Activated naive CD4-positive, alpha-beta T cell treated with anti-CD3 and anti-CD28 coated beads, Interleukin-2, amount 10 ng/mL, durations not matched to agents 7 days and 5 days (primary cell): ENCODE measurements at regions of chr6 and their contacts with region 1.

Region 1: DNA sequence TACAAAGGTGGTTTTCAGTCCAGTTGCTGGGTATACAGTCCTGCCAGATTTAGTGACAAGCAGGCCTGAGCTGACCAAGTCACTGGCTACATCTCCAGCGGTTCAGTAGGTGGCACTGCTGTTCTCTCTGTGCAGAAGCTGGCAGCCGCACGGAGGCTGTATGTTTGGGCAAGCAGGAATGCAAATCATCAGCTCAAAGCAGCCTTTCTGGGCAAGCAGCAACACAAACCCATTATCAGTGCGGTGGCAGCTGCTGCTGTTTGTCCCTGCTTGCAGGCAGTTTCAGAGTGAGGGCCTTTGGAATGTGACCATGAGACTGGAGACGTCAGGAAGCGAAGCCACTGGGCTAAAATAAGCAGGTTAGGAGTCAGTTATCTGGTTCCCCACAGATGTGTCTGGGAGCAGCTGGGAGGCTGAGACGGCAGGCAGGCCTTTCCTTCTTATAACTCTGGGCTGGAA is 72.5 kb downstream of the TXLNB start:
- DNase-seq: peak; percentile 84
- H3K4me3 Mint-ChIP-seq: no peak overlapping the region
- H3K27ac Mint-ChIP-seq: peak overlapping the region; percentile 20
- H3K4me1 Mint-ChIP-seq: peaks cover 14% of the 10 kb centered on the region
- H3K27me3 Mint-ChIP-seq: no peaks in the 10 kb centered on the region

Region 2: DNA sequence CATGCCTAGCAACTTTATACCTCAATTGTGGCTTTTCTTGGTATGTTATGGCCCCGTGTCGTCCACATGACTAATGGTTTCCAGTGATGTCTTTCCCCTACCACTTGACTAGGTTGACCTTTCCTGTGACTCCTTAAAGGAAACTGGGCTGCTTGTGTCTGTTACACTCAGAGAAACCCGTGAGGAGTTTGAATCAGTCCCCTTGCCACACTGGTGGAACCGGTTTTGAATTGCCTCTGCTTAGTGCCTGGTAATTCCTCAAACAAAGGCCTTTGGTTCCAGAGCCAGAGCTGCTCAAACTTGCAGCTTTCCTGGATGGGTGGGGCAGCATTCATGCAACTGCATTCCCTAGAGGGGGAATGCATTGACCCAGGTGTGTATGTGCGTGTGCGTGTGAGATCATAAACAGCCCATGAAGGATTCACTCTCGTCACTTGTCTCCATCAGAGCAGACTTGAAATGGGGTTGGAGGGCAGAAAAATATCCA is 401.4 kb before region 1 on chr6:
- CTCF ChIA-PET with region 1: interaction called, 11 read pairs
- DNase-seq: no peak
- H3K4me3 Mint-ChIP-seq: no peak overlapping the region
- H3K27ac Mint-ChIP-seq: no peak overlapping the region
- H3K4me1 Mint-ChIP-seq: peaks cover 25% of the 10 kb centered on the region
- H3K27me3 Mint-ChIP-seq: no peaks in the 10 kb centered on the region

Region 3: GRCh38 chr6:139175389-139175788 is 43.9 kb before region 1 on chr6:
- CTCF ChIA-PET with region 1: interaction called, 11 read pairs
- DNase-seq: no peak
- H3K4me3 Mint-ChIP-seq: no peak overlapping the region
- H3K27ac Mint-ChIP-seq: peak overlapping the region; percentile 79
- H3K4me1 Mint-ChIP-seq: peaks cover 82% of the 10 kb centered on the region
- H3K27me3 Mint-ChIP-seq: no peaks in the 10 kb centered on the region

Region 4: DNA sequence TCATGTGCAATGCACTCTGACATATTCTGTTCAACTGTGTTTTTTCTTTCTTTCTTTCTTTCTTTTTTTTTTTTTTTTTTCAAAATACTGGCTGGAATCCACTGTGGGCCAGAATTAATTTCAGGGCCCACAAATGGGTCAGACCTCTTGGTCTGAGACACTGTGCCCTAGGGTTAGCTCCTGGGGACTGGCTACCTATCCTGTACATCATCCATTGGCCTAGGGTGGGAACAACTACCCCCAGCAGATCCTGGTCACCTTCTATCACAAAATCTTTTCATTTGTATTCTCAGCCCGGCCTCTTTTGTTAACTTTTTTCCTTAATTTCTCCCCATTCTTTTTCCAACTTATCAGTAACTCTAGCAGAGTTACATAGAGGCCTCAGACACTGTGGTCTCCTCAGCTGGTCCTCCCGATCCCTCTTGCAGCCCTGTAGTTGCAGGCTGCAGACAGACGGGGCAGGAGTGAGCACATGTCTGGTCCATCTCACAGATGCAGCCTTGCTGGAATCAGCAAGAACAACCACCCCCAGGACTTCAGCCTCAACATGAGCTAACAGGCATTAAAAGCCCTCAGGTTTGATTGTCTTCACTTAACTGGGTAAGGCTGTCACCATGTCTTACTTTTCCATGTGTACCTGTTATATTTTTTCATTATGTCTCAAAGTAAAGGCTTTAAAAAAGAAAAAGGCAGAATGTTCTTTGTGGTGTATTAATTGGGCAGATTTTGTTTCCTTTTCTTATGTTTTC is 31.2 kb after region 1 on chr6:
- CTCF ChIA-PET with region 1: interaction called, 11 read pairs
- DNase-seq: peak; percentile 72
- H3K4me3 Mint-ChIP-seq: peak overlapping the region; percentile 52
- H3K27ac Mint-ChIP-seq: peak overlapping the region; percentile 96
- H3K4me1 Mint-ChIP-seq: peaks cover 51% of the 10 kb centered on the region
- H3K27me3 Mint-ChIP-seq: no peaks in the 10 kb centered on the region

Region 5: DNA sequence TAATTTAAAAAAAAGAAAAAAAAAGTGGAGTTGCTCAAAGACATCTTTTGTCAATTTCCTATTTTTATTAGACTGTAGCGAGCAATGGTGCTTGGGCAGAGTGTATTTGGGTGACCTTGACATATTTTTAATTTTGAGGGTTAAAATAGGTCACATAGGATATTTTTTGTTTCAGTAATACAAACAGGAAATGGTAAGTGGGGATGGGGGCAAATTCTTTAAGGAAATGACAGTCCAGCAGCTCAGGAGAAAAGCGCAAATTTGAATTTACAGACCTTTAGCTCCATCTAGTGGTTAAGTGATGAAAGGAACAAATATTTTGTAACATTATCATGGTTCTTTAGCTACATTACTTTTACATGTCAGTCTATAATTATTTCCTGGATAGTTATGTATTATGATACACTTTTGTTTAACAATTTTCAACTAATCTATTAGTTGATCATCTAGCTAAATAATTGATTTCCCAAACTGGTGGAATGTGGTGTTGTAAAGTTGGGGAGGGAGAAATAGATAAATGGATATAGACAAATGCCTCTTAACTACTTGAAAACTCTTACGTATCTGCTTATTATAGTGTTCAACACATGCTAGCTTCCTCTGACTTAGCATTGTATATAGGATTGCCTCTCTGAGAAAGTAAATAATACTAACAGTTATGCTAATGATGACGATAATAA is 145.1 kb after region 1 on chr6:
- CTCF ChIA-PET with region 1: interaction called, 144 read pairs
- DNase-seq: no peak
- H3K4me3 Mint-ChIP-seq: no peak overlapping the region
- H3K27ac Mint-ChIP-seq: peak overlapping the region; percentile 10
- H3K4me1 Mint-ChIP-seq: peaks cover 34% of the 10 kb centered on the region
- H3K27me3 Mint-ChIP-seq: no peaks in the 10 kb centered on the region

Region 6: GRCh38 chr6:139375232-139376016 is 156.1 kb after region 1 on chr6:
- CTCF ChIA-PET with region 1: interaction called, 18 read pairs
- DNase-seq: peak; percentile 91
- H3K4me3 Mint-ChIP-seq: peak overlapping the region; percentile 97
- H3K27ac Mint-ChIP-seq: peak overlapping the region; percentile 100
- H3K4me1 Mint-ChIP-seq: peaks cover 31% of the 10 kb centered on the region
- H3K27me3 Mint-ChIP-seq: peaks cover 3% of the 10 kb centered on the region